Activated naive CD4-positive, alpha-beta T cell treated with anti-CD3 and anti-CD28 coated beads for 36 hours (primary cell): ENCODE measurements at regions of chr9 and their contacts with region 1.

Region 1: GRCh38 chr9:127955294-127956035 is 17.8 kb upstream of the DPM2 start:
- DNase-seq: peak; percentile 96
- H3K4me3 Mint-ChIP-seq: peak overlapping the region; percentile 10
- H3K27ac Mint-ChIP-seq: peak overlapping the region; percentile 95
- H3K4me1 Mint-ChIP-seq: peaks cover 96% of the 10 kb centered on the region
- H3K27me3 Mint-ChIP-seq: no peaks in the 10 kb centered on the region

Region 2: DNA sequence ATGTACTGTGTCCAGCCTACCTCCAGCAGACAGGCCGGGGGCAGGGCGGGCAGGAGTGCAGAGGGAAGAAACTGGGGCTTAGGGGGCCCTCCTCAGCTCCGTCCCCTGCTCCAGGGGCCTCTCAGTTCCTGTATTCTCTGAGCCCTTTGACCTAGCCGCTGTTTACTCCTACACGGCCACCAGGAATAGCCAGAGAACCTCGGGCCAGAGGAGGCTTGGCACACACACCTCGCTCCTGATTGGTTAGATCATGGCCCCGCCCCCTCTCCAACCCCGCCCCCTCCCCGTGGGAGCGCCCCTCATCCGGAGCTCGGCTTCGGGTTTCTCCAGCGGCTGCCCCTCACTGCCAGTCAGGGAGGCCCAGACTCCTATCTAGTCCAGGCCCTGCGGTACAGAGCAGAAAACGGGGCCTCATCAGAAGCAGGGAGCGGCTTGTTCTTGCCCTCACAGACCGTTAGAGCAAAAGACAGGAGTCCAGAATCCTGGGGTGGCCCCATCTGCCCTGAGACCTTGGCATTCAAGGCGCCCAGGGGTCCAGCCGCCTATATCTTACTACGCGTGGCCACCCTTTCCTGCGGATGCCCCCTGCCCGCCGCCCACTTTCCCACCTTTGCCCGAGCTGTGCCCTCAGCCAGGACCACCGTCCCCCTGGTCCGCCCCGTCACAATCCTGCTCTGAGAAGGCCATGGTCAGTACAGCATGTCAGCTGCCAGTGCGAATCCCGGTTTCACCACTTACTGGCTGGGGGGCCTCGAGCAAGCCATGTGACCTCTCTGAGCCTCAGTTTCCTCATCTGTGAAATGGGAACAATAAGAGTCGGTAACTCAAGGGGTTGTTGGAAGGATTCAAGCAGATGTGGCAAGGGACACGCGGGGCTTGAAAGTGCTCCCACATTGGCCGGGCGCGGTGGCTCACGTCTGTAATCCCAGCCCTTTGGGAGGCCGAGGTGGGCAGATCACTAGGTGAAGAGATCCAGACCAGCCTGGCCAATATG is 58.0 kb before region 1 on chr9:
- CTCF ChIA-PET with region 1: no interaction called
- intact Hi-C with region 1: no loop called
- DNase-seq: peak; percentile 36
- H3K4me3 Mint-ChIP-seq: peak overlapping the region; percentile 39
- H3K27ac Mint-ChIP-seq: no peak overlapping the region
- H3K4me1 Mint-ChIP-seq: peaks cover 33% of the 10 kb centered on the region
- H3K27me3 Mint-ChIP-seq: no peaks in the 10 kb centered on the region

Region 3: GRCh38 chr9:127921557-127922120 is 33.8 kb before region 1 on chr9:
- CTCF ChIA-PET with region 1: no interaction called
- intact Hi-C with region 1: no loop called
- DNase-seq: peak; percentile 83
- H3K4me3 Mint-ChIP-seq: peak overlapping the region; percentile 29
- H3K27ac Mint-ChIP-seq: no peak overlapping the region
- H3K4me1 Mint-ChIP-seq: peaks cover 30% of the 10 kb centered on the region
- H3K27me3 Mint-ChIP-seq: peaks cover 2% of the 10 kb centered on the region

Region 4: GRCh38 chr9:127937388-127938280 is 17.8 kb before region 1 on chr9 and contains the start of gene DPM2:
- CTCF ChIA-PET with region 1: interaction called, 120 read pairs
- intact Hi-C with region 1: loop called (anchors 2 kb)
- DNase-seq: peak; percentile 87
- H3K4me3 Mint-ChIP-seq: peak within 1 kb of the TSS; percentile 100
- H3K27ac Mint-ChIP-seq: peak within 1 kb of the TSS; percentile 96
- H3K4me1 Mint-ChIP-seq: peaks cover 43% of the 10 kb centered on the region
- H3K27me3 Mint-ChIP-seq: no peaks in the 10 kb centered on the region
- total RNA-seq, gene DPM2: 41.6 to 43.4 TPM

Region 5: DNA sequence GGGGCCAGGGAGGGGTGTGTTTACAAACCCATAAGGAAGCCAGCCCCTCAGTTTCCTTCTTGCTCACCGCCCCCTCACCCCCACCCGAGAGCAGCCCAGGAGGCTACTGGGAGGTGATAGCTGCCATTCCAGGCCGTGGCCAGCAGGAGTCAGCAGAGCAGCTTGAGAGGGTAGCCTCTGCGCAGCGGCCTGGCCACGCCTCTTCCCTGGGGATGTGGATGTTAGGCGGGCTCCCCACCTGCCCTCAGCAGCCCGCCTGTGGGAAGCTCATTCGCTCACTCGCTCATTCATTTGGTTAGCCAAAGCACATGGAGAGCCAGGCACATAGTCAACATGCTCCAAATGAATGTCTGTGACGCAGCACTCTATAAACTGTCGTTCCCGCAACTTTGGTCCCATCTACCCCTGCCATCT is 11.7 kb before region 1 on chr9:
- CTCF ChIA-PET with region 1: interaction called, 120 read pairs
- intact Hi-C with region 1: loop called (anchors 1 kb)
- DNase-seq: peak; percentile 89
- H3K4me3 Mint-ChIP-seq: no peak overlapping the region
- H3K27ac Mint-ChIP-seq: peak overlapping the region; percentile 82
- H3K4me1 Mint-ChIP-seq: peaks cover 37% of the 10 kb centered on the region
- H3K27me3 Mint-ChIP-seq: no peaks in the 10 kb centered on the region

Region 6: DNA sequence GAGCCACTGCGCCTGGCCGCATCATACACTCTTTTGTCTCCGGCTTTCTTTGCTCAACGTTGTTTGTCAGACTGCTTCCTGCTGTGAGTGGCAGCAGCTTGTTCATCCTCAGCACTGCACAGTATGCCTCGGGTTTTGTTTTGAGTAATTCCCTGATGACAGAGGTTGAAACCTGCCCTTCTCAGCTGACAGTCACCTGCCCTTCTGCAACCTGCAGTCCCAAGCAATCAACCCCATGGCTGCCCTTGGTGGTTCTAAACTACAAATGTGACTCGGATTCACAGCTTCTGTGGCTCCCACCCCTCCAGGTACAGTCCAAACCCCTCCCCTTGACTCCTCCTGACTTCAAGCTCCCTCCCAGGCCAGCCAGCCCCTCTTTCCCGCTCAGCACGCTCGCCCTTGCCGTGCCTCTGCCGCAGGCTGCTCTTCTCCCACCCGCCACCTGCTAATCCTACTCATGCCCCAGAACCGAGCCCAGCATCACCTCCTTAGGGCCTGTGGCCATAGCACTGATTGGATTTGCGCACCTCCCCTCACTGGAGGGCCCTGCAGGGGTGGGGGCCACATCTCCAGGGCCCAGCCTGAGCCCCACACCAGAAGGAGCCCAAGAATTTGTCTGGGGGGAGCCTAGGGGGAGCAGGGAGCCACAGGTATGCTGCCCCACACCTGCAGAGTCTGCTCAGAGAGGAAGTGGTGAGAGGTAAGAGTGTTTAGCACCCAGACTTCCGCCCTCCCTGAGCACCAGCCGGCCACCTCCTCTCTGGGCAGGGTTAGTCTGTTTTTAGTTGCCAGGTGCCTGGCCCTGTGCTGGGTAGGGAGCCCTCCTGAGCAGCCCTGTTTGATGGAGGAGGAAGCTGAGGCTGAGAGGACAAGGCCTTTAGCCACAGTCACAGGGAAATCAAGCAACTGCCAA is 15.2 kb after region 1 on chr9:
- CTCF ChIA-PET with region 1: interaction called, 99 read pairs
- intact Hi-C with region 1: loop called (anchors 1 kb)
- DNase-seq: peak; percentile 93
- H3K4me3 Mint-ChIP-seq: peak overlapping the region; percentile 72
- H3K27ac Mint-ChIP-seq: peak overlapping the region; percentile 99
- H3K4me1 Mint-ChIP-seq: peaks cover 96% of the 10 kb centered on the region
- H3K27me3 Mint-ChIP-seq: no peaks in the 10 kb centered on the region

Region 7: DNA sequence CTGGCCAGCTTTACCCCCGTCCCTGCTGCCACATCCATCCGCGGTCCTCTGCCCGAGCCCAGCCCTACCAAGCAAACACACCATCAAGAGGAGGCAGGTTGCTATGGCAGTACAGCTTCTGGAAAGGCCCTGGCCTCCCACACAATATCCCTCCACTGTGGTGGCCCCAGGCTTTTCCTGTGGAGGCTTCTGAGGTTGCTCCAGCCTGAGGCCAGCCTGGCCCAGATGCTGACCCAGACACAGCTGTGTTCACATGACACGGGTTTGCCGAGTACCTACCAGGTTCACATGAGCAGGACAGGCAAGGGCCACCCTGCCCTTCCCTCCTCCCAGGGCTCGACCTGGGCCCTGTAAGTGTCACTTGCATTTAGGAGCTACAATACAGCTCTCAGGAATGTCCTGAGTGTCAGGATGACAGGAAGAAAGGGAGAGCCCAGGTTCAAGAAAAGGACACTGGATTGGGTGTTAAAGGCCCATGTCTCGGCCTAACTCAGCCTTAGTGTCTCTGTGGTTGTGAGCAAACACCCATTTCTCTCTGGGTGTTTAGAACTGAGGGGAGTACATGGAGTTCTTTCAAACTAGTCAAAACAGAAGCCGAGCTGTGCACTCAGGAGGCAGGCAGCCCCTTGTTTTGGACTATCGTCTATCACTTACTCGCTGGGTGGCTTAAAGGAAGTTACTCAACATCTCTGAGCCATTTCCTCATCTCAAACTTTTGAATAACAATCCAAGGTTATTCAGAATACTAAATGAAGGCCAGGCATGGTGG is 71.5 kb after region 1 on chr9:
- CTCF ChIA-PET with region 1: interaction called, 111 read pairs
- intact Hi-C with region 1: loop called (anchors 1 kb)
- DNase-seq: peak; percentile 80
- H3K4me3 Mint-ChIP-seq: peak overlapping the region; percentile 80
- H3K27ac Mint-ChIP-seq: peak overlapping the region; percentile 98
- H3K4me1 Mint-ChIP-seq: peaks cover 90% of the 10 kb centered on the region
- H3K27me3 Mint-ChIP-seq: no peaks in the 10 kb centered on the region

Region 8: DNA sequence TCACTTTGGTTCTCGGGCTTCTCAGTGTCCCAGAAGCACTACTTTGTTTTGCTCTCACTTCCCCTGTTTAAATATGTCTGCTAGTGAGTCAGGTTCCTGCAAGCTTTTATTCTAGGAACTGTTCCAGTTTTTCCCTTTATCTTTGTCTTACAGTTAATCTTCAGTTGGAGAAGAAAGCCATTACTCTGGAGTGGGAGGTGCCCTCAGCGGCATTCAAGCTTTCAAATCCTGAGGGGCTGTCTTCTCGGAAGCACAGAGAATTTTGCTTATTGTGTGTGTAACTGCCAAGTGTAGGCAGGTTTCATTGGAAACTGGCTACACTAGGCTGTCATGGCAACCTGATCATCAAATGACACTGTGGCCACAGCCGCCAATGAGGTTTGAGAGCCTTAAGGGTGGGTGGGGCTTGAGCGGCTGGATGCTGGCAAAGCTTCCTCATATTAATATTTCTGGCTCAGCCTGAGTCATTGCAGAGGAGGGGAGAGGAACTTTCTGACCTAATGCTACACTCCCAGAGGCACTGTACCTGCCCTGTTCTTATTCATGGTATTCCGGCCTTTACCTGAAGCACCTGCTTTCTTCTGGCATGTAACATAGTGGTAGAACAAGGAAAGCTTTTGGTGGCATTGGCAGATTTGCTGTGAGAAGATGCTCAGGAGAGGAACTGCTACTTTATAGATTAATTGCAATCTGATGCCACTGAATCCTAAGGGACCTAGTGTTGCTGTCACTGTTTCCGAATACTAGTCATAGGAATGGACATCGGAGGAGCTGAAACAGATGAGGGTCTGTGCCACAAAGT is 138.9 kb after region 1 on chr9:
- CTCF ChIA-PET with region 1: no interaction called
- intact Hi-C with region 1: loop called (anchors 5 kb)
- DNase-seq: peak; percentile 91
- H3K4me3 Mint-ChIP-seq: peak overlapping the region; percentile 65
- H3K27ac Mint-ChIP-seq: peak overlapping the region; percentile 95
- H3K4me1 Mint-ChIP-seq: peaks cover 87% of the 10 kb centered on the region
- H3K27me3 Mint-ChIP-seq: no peaks in the 10 kb centered on the region